ENCODE measurements at regions of chr1 and their contacts with region 1.

Region 1: GRCh38 chr1:244835276-244836134 is at the start of gene COX20:
- DNase-seq: peak in 1 of 2 donors; percentile 90
- H3K4me3 ChIP-seq: peak within 1 kb of the TSS; percentile 67 to 85 (median 76)
- H3K27ac ChIP-seq: peak within 1 kb of the TSS; percentile 99 to 100 (median 100)
- H3K4me1 ChIP-seq: peaks cover 19 to 59% (median 38%) of the 10 kb centered on the region in 4 donors
- H3K27me3 ChIP-seq: no peaks in the 10 kb centered on the region
- CTCF ChIP-seq: no peak
- EP300 ChIP-seq: no peak
- POLR2A ChIP-seq: peak in 1 of 4 donors; percentile 41
- total RNA-seq, gene COX20: 5.5 to 58.0 (median 28.0) TPM

Region 2: DNA sequence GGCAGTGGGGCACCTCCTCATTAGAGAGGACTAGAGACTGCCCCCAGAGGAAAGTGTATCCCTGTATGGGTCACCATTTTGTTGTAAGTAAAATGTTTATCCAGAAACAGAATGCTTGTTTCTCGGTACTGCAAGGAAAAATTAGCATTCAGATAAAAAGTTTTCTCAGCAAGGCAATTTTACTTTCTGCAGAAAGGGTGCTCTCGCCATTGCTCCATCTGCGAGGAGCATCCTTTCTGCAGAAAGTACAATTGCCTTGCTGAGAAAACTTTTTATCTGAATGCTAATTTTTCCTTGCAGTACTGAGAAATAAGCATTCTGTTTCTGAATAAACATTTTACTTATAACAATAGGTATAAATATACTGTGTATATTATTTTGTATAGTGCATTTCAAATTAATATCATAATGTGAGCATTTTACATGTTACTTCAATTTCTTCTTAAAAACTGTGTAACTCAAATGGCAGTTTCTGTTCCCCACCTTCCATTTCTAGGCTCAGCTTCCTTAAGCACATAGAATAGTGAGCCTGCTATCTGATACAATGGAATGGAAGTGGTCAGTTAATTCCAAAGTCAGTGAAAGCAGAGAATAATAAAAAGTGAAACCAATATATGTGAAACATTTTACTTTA is 259.1 kb before region 1 on chr1:
- intact Hi-C with region 1: no loop called
- DNase-seq: no peak
- H3K4me3 ChIP-seq: no peak overlapping the region
- H3K27ac ChIP-seq: no peak overlapping the region
- H3K4me1 ChIP-seq: no peaks in the 10 kb centered on the region
- H3K27me3 ChIP-seq: no peaks in the 10 kb centered on the region
- CTCF ChIP-seq: no peak
- EP300 ChIP-seq: no peak
- POLR2A ChIP-seq: no peak

Region 3: DNA sequence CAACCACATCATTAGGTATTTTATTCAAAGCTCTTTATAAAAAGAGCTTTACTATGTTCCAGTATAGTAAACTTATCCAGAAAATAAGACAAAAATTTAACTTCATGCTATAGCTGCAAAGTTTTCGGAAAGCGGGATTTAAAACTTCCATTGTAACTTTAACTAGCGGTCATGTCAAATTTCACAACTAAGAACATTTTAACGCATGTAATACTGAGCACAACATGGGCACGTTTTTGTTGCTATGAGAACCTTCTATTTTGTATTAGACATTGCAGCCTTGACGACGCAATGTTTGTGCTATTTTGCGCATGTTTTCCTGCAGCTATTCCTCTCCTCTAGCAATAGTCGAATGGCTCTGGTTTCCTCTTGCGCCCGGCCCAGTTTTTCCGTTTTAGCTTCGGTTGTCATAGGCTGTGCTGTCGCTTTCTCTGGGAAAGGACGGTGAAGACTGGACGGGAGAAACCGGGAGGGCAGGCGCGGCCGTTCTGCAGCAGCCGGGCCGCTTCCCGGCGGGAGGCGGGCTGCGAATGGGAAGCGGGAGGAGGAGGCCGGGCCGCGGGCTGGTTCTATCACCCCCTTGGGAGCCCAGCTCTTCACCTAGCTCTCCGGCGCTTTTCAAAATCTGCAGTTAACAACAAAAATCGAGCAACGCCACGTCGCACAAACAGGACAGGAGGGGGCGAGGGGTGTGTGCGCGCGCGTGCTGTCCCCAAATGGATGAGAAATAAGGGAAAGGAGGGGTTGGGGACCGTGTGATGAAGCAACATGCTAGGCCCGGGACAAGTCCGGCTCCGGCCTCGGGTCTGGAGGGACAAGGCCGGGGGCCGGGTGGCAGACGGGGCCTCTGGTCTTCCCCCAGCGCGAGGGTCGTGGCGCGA is 134.1 kb after region 1 on chr1:
- intact Hi-C with region 1: loop called (anchors 10 kb)
- DNase-seq: peak; percentile 72 to 96
- H3K4me3 ChIP-seq: peak overlapping the region; percentile 56 to 85 (median 68)
- H3K27ac ChIP-seq: peak overlapping the region; percentile 99 to 100 (median 100)
- H3K4me1 ChIP-seq: peaks cover 13 to 34% (median 25%) of the 10 kb centered on the region in 4 donors
- H3K27me3 ChIP-seq: no peaks in the 10 kb centered on the region
- CTCF ChIP-seq: no peak
- EP300 ChIP-seq: no peak
- POLR2A ChIP-seq: peak in 2 of 4 donors; percentile 34 to 48

Measured in stomach (tissue), 19 donors.